Caco-2 (cell line): ENCODE measurements at regions of chr1 and their contacts with region 1.

Region 1: GRCh38 chr1:68291688-68292384 is 59.5 kb upstream of the WLS start:
- DNase-seq: peak; percentile 29 to 40
- H3K4me3 ChIP-seq: no peak overlapping the region
- H3K4me3 Mint-ChIP-seq: peak overlapping the region; percentile 24
- H3K27ac Mint-ChIP-seq: peak overlapping the region; percentile 45
- H3K4me1 ChIP-seq: peaks cover 25% of the 10 kb centered on the region
- H3K4me1 Mint-ChIP-seq: peaks cover 18% of the 10 kb centered on the region
- H3K27me3 ChIP-seq: no peaks in the 10 kb centered on the region
- H3K27me3 Mint-ChIP-seq: no peaks in the 10 kb centered on the region
- CTCF ChIP-seq: no peak

Region 2: GRCh38 chr1:68346188-68346808 is 54.5 kb after region 1 on chr1:
- CTCF ChIA-PET with region 1: no interaction called
- POLR2A ChIA-PET with region 1: no interaction called
- intact Hi-C with region 1: loop called (anchors 2 kb)
- DNase-seq: peak in 1 of 2 experiments; percentile 1
- H3K4me3 ChIP-seq: no peak overlapping the region
- H3K4me3 Mint-ChIP-seq: no peak overlapping the region
- H3K27ac Mint-ChIP-seq: no peak overlapping the region
- H3K4me1 ChIP-seq: no peaks in the 10 kb centered on the region
- H3K4me1 Mint-ChIP-seq: no peaks in the 10 kb centered on the region
- H3K27me3 ChIP-seq: no peaks in the 10 kb centered on the region
- H3K27me3 Mint-ChIP-seq: peaks cover 4% of the 10 kb centered on the region
- CTCF ChIP-seq: peak; percentile 15 to 34